H1 (cell line): ENCODE measurements at regions of chr22 and their contacts with region 1.

Region 1: GRCh38 chr22:18156850-18157713 is 7.1 kb downstream of the USP18 start:
- DNase-seq: peak; percentile 54 to 92
- H3K4me3 ChIP-seq: no peak overlapping the region; a peak in 1 of 8 replicates
- H3K27ac ChIP-seq: no peak overlapping the region
- H3K4me1 ChIP-seq: peaks cover 0 to 6% (median 2%) of the 10 kb centered on the region in 4 experiments; a peak in 3 of 7 replicates
- H3K27me3 ChIP-seq: no peaks in the 10 kb centered on the region
- CTCF ChIP-seq: peak; percentile 83 to 93 (median 92)
- EP300 ChIP-seq: no peak
- POLR2A ChIP-seq: no peak
- RAD21 ChIP-seq: peak; percentile 97

Region 2: DNA sequence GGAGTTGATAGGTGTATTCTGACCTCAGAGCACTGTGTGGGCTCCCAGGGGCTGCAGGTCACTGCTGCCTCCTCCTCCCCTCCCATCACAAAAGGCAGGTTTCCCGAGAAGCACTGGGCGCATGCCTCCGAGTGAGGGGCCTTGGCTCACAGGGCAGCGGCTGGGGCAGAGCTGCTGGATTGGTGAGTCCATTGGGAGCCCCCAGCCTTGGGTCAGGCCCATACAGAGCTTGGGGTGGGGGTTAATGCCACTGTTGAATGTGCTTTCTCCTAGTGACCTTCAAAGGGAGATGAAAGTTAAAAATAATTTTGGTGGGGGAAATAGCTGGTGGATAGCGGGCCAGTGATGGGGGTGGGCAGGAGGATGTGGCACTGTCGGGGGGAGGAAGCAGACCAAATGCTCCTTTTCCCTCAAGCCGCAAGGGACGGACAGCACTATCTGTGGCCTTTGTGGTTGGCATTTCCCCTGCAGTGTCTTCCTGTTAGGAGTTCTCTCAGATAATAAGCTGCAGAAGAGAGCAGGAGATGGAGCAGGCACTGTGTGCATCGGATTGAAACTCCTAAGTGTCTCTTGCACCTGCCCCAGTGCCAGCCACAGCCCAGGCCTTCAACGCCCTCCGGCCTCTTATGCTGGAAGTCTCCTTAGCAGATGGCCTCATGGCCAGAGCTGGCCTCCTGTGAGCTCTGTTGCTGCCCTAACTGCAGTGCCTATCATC is 43.2 kb before region 1 on chr22:
- CTCF ChIA-PET with region 1: interaction called, 15 read pairs
- POLR2A ChIA-PET with region 1: no interaction called
- DNase-seq: no peak
- H3K4me3 ChIP-seq: no peak overlapping the region
- H3K27ac ChIP-seq: no peak overlapping the region
- H3K4me1 ChIP-seq: peaks cover 0 to 9% (median 5%) of the 10 kb centered on the region in 4 experiments; a peak in 5 of 7 replicates
- H3K27me3 ChIP-seq: peaks cover 11 to 33% (median 26%) of the 10 kb centered on the region in 4 experiments
- CTCF ChIP-seq: no peak
- EP300 ChIP-seq: no peak
- POLR2A ChIP-seq: no peak
- RAD21 ChIP-seq: no peak

Region 3: DNA sequence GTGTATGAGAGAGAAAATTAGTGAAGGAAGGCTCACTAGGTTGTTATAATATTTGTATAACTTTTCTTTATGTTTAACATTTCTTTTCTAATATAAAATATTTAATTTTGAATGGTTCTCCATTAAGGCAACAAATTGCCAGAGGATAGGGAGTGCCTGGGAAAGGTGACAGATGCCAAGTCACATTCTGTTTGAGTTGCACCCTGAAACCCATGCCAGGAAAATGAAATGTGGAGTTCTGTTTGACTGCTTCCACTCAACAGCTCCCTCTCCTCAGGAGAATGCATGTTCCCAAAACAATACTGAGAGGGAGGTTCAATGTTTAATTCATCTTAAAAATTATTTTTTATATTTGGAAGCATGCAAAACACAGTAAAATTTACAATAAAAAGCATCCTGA is 13.0 kb before region 1 on chr22:
- CTCF ChIA-PET with region 1: interaction called, 10 read pairs
- POLR2A ChIA-PET with region 1: no interaction called
- DNase-seq: no peak
- H3K4me3 ChIP-seq: no peak overlapping the region
- H3K27ac ChIP-seq: no peak overlapping the region
- H3K4me1 ChIP-seq: no peaks in the 10 kb centered on the region
- H3K27me3 ChIP-seq: no peaks in the 10 kb centered on the region; a peak in 2 of 7 replicates
- CTCF ChIP-seq: no peak
- EP300 ChIP-seq: no peak
- POLR2A ChIP-seq: no peak
- RAD21 ChIP-seq: no peak